ENCODE measurements at regions of chr1 and their contacts with region 1.

Region 1: DNA sequence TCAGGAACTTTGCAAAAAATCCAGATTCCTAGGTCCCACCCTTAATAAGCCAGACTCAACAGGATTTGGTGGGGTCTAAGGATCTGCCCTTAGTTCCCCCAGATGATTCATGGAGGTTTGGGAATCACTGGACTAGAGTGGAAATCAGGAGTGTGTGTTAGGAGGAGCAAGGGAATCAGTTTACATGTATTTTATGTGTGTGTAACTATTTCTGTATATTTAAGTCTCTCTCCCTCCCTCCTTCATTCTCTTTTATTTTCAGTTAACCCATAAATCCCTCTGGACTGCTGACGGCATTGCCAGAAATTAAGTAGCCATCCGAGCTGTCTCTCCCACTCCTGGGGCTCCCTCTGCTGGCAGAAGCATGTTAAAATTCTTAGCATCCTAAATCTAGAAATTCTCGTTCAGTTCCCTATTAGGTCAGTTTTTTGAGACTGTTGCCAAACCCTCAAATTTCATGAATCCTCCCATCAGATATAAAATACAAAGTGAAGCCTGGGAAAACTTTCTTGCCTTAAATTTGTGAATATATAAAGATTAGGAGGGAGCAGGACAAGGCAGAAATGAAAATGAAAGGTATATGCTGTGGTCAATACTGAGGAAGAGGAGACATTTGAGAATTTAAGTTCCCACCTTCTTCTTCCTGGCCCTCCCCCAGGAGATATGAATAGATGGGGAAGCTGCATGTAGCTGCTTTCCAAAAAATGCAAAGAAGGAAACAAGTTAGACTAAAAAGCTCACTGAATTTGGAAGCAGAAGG is 11.7 kb upstream of the HSD11B1 start:
- DNase-seq: peak; percentile 81
- ATAC-seq: peak; percentile 68
- H3K4me3 Mint-ChIP-seq: peak overlapping the region; percentile 45
- H3K27ac Mint-ChIP-seq: no peak overlapping the region
- H3K4me1 Mint-ChIP-seq: peaks cover 28% of the 10 kb centered on the region
- H3K27me3 Mint-ChIP-seq: peaks cover 3% of the 10 kb centered on the region

Region 2: GRCh38 chr1:209505044-209505443 is 187.9 kb before region 1 on chr1:
- CTCF ChIA-PET with region 1: no interaction called
- POLR2A ChIA-PET with region 1: no interaction called
- DNase-seq: no peak
- ATAC-seq: no peak
- H3K4me3 Mint-ChIP-seq: no peak overlapping the region
- H3K27ac Mint-ChIP-seq: no peak overlapping the region
- H3K4me1 Mint-ChIP-seq: no peaks in the 10 kb centered on the region
- H3K27me3 Mint-ChIP-seq: no peaks in the 10 kb centered on the region

Region 3: DNA sequence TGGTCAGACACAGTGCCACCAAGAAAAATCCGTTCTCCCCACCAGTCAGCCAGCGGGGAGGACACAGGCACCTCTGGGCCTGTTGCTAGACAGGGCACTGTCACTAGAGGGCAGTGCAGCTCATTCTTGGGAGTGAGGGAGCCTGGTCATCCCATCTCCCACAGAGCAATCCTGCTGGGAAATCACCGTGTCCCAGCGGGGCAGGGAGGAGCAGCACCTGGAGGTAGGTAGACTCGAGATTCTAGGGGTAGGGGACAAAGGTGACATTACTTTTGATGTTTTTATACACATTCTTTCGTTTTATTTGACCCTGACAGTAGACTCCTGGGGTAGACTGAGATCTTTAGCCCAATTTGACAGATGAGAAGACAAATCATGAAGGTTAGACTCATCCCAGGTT is 116.1 kb before region 1 on chr1:
- CTCF ChIA-PET with region 1: interaction called, 11 read pairs
- POLR2A ChIA-PET with region 1: no interaction called
- DNase-seq: peak; percentile 71
- ATAC-seq: peak; percentile 92
- H3K4me3 Mint-ChIP-seq: no peak overlapping the region
- H3K27ac Mint-ChIP-seq: no peak overlapping the region
- H3K4me1 Mint-ChIP-seq: no peaks in the 10 kb centered on the region
- H3K27me3 Mint-ChIP-seq: peaks cover 27% of the 10 kb centered on the region

Region 4: DNA sequence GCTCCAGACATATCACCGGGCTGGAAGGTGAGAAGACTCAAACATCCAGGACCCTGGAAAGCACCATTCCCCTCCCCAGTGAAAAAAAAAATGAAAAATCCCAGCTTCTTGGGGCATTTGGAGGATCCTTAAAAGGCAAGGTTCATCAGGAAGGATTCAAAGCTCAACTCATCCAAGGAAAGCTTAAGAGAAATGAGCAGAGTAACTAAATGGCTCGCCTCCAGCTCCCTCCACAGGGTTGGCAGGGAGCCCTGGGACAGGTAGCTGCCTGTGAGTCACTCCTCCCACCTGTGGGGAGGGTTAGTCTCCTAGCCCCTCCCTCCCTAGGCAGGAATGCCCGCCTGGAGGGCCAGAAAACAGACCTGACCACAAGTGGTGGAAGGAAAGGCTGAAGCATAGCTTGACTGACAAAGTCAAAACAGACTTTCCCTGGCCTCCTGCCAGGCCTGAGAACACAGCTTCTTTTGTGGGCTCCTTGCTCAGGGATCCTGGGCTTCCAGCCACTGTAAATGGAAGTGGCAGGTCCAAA is 40.0 kb before region 1 on chr1:
- CTCF ChIA-PET with region 1: interaction called, 17 read pairs
- POLR2A ChIA-PET with region 1: no interaction called
- DNase-seq: peak; percentile 24
- ATAC-seq: no peak
- H3K4me3 Mint-ChIP-seq: no peak overlapping the region
- H3K27ac Mint-ChIP-seq: no peak overlapping the region
- H3K4me1 Mint-ChIP-seq: peaks cover 35% of the 10 kb centered on the region
- H3K27me3 Mint-ChIP-seq: no peaks in the 10 kb centered on the region

Region 5: GRCh38 chr1:209674957-209675564 is 17.9 kb before region 1 on chr1 and contains the start of gene G0S2:
- CTCF ChIA-PET with region 1: interaction called, 20 read pairs
- POLR2A ChIA-PET with region 1: no interaction called
- DNase-seq: peak; percentile 42
- ATAC-seq: peak; percentile 58
- H3K4me3 Mint-ChIP-seq: peak within 1 kb of the TSS; percentile 57
- H3K27ac Mint-ChIP-seq: no peak within 1 kb of the TSS
- H3K4me1 Mint-ChIP-seq: peaks cover 54% of the 10 kb centered on the region
- H3K27me3 Mint-ChIP-seq: peaks cover 42% of the 10 kb centered on the region
- total RNA-seq, gene G0S2: not detected

Region 6: DNA sequence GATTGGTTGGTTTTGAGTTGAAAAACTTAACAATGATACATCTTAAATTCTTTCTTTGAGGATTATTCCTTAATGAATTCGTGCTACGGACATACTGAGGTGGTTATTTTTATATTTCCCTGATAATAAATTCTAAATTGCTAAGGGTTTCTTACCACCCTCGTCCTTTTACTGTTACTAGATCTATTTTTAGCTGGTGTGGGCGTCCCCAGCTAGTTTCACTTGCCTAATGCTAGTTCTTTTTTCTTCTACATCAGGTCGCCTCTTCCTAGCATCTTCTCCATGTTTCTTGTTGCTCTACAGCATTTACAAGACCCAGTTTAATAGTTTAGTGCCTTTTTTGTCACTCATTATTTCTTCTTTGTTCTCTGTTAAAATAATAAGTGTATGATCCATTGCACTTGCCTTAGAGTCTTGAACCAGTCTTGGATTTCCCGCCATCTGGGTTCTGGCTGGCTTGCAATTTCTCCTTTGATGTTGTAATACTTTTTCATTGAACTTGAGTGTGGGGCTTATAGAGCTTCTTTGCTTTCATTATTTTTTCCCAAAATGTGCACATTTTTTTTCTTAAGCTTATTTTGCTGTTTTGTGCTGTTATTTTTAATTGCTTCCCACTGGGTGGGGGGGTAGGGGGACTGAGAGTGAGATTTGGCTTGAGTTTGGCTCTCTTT is 11.0 kb after region 1 on chr1:
- CTCF ChIA-PET with region 1: interaction called, 12 read pairs
- POLR2A ChIA-PET with region 1: interaction called, 3 read pairs
- DNase-seq: no peak
- ATAC-seq: no peak
- H3K4me3 Mint-ChIP-seq: no peak overlapping the region
- H3K27ac Mint-ChIP-seq: no peak overlapping the region
- H3K4me1 Mint-ChIP-seq: peaks cover 3% of the 10 kb centered on the region
- H3K27me3 Mint-ChIP-seq: no peaks in the 10 kb centered on the region